ENCODE measurements at regions of chr16 and their contacts with region 1.

Region 1: GRCh38 chr16:25014500-25015147 is 545 bp downstream of the ARHGAP17 start:
- DNase-seq: peak in 6 of 10 donors; percentile 20 to 37 (median 28)
- ATAC-seq: peak; percentile 31 to 48
- H3K4me3 Mint-ChIP-seq: peak overlapping the region; percentile 84 to 98 (median 95)
- H3K27ac Mint-ChIP-seq: peak overlapping the region; percentile 91 to 99 (median 97)
- H3K4me1 Mint-ChIP-seq: peaks cover 40 to 90% (median 79%) of the 10 kb centered on the region in 4 donors
- H3K27me3 Mint-ChIP-seq: no peaks in the 10 kb centered on the region

Region 2: DNA sequence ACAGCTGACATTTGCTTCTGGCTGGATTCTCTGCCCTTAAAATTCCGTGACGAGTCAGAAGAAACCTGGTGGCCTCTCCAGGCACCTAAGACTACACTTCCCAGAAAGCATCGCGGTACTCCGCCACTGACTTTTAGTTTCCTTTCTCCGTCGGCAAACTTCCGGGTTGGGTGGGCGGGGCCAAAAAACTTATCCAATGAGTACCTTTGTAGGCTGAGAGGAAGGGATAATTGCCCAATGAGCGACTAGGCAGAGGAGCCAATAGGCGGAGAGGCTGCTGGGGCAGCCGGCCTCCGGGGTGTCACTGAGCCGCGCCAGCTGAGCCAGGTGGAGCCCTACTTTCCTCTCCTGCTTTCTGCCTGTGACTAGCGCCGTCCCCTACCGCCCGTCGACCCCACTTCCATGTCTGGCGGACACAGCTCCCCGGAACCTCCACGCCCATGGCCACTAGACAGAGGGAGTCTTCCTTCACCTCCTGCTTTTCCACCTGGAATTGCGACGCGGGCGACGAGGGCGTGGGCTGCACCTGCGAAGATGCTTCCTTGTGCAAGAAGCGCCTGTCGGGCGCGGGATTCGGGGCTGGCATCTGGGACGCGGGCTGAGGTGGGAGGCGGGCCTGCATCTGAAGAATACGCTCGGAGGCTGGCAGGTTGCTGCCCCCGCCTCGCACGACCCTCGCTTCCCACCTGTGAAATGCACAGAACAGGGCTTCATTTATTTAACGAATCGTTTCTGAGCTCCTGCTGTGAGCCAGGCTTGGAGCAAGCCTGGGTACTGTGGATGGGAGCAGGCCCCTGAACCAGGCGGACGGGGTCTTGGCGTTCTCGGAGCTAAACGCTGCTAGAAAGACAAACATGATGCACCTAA is 17.1 kb after region 1 on chr16:
- POLR2A ChIA-PET with region 1: interaction called, 33 read pairs
- DNase-seq: peak; percentile 81 to 95 (median 91)
- ATAC-seq: peak; percentile 100
- H3K4me3 Mint-ChIP-seq: peak overlapping the region; percentile 84 to 99 (median 96)
- H3K27ac Mint-ChIP-seq: peak overlapping the region; percentile 36 to 97 (median 88)
- H3K4me1 Mint-ChIP-seq: peaks cover 34 to 46% (median 35%) of the 10 kb centered on the region in 4 donors
- H3K27me3 Mint-ChIP-seq: no peaks in the 10 kb centered on the region

Region 3: GRCh38 chr16:25051406-25052150 is 37.0 kb after region 1 on chr16:
- POLR2A ChIA-PET with region 1: interaction called, 84 read pairs
- DNase-seq: no peak
- ATAC-seq: no peak
- H3K4me3 Mint-ChIP-seq: peak overlapping the region in 9 of 10 donors; percentile 6 to 94 (median 59)
- H3K27ac Mint-ChIP-seq: peak overlapping the region; percentile 49 to 99 (median 82)
- H3K4me1 Mint-ChIP-seq: peaks cover 19 to 55% (median 46%) of the 10 kb centered on the region in 4 donors
- H3K27me3 Mint-ChIP-seq: no peaks in the 10 kb centered on the region

Region 4: DNA sequence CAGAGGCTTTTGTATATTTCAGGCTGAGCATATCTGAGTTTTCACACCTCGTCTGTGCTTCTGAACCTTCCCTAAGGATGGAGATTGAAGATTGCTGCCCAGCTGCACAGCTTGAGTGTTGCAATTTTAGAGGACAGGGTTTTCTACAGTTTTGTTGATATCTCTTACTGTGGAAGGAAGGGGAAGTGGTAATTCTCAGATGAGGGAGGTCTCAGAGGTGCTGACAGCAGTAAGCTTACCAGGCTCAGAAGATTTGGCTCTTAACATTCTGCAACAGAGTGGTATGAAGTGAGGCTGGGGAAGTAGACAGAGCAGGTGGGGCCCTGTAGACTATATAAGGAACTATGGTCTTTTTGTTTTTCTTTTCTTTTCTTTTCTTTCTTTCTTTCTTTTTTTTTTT is 46.3 kb after region 1 on chr16:
- POLR2A ChIA-PET with region 1: interaction called, 25 read pairs
- DNase-seq: peak in 9 of 10 donors; percentile 6 to 85 (median 52)
- ATAC-seq: peak; percentile 98 to 100
- H3K4me3 Mint-ChIP-seq: peak overlapping the region; percentile 67 to 88 (median 82)
- H3K27ac Mint-ChIP-seq: peak overlapping the region; percentile 91 to 100 (median 97)
- H3K4me1 Mint-ChIP-seq: peaks cover 29 to 71% (median 63%) of the 10 kb centered on the region in 4 donors
- H3K27me3 Mint-ChIP-seq: no peaks in the 10 kb centered on the region

Region 5: DNA sequence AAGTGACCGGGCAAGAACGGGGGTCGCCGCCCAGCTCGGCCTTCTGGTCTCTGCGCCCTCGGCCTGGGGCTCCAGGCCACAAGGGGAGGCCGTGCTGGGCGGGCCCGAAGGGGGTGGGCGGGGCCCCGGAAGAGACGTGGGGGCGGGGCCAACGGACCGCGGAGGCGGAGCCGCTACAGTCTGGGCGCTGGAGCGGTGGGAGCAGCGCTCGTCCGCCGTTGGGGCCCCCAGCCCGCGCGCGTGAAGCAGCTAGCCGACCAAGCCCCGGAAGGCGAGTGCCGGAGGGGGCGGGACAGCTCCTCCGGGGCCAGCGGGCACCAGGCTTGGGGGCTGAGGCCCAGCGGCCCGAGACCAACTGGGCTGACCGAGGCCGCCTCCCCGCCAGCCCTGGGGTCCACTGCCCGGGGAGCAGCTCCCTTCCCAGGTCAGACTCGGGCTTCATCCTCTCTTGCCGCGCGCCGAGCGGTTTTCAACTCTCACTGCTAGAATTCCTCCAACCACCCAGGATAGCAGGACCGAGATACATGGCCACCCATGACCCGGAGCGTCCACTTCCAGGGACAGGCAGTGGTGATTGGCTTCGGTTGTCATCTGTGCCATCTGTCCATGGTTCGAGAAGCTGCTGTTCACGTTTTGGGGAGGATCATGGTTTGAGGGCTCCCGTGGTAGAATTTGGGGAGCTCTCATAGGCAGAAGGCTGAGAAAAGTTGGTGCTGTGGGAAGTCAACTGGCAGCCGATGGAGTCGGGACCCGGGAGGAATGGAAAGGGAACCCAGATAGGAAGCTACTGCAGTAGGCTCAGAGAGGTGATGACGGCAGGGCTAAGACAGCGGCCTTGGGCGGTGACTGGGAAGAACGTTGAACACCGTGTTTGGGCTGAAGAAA is 52.4 kb after region 1 on chr16:
- POLR2A ChIA-PET with region 1: interaction called, 20 read pairs
- DNase-seq: peak; percentile 49 to 91 (median 78)
- ATAC-seq: peak; percentile 94 to 95
- H3K4me3 Mint-ChIP-seq: peak overlapping the region; percentile 82 to 97 (median 94)
- H3K27ac Mint-ChIP-seq: peak overlapping the region; percentile 76 to 96 (median 94)
- H3K4me1 Mint-ChIP-seq: peaks cover 19 to 56% (median 54%) of the 10 kb centered on the region in 4 donors
- H3K27me3 Mint-ChIP-seq: no peaks in the 10 kb centered on the region

Region 6: GRCh38 chr16:25111403-25112166 is 97.0 kb after region 1 on chr16 and contains the start of gene LCMT1:
- POLR2A ChIA-PET with region 1: interaction called, 14 read pairs
- DNase-seq: peak; percentile 79 to 96 (median 91)
- ATAC-seq: peak; percentile 91 to 92
- H3K4me3 Mint-ChIP-seq: peak within 1 kb of the TSS; percentile 92 to 99 (median 96)
- H3K27ac Mint-ChIP-seq: peak within 1 kb of the TSS; percentile 76 to 96 (median 94)
- H3K4me1 Mint-ChIP-seq: peaks cover 39 to 77% (median 68%) of the 10 kb centered on the region in 4 donors
- H3K27me3 Mint-ChIP-seq: no peaks in the 10 kb centered on the region
- polyA plus RNA-seq, gene LCMT1: 38.7 to 41.4 (median 40.6) TPM

Measured in naive thymus-derived CD8-positive, alpha-beta T cell (primary cell).